Esophagus squamous epithelium (tissue), 5 donors: ENCODE measurements at regions of chr6 and their contacts with region 1.

Region 1: GRCh38 chr6:28775405-28776129 is 148.2 kb downstream of the TRIM27 start:
- DNase-seq: no peak
- H3K4me3 ChIP-seq: no peak overlapping the region
- H3K27ac ChIP-seq: no peak overlapping the region
- H3K4me1 ChIP-seq: no peaks in the 10 kb centered on the region
- H3K27me3 ChIP-seq: peaks cover 0 to 100% (median 58%) of the 10 kb centered on the region in 4 donors
- CTCF ChIP-seq: no peak
- POLR2A ChIP-seq: no peak

Region 2: DNA sequence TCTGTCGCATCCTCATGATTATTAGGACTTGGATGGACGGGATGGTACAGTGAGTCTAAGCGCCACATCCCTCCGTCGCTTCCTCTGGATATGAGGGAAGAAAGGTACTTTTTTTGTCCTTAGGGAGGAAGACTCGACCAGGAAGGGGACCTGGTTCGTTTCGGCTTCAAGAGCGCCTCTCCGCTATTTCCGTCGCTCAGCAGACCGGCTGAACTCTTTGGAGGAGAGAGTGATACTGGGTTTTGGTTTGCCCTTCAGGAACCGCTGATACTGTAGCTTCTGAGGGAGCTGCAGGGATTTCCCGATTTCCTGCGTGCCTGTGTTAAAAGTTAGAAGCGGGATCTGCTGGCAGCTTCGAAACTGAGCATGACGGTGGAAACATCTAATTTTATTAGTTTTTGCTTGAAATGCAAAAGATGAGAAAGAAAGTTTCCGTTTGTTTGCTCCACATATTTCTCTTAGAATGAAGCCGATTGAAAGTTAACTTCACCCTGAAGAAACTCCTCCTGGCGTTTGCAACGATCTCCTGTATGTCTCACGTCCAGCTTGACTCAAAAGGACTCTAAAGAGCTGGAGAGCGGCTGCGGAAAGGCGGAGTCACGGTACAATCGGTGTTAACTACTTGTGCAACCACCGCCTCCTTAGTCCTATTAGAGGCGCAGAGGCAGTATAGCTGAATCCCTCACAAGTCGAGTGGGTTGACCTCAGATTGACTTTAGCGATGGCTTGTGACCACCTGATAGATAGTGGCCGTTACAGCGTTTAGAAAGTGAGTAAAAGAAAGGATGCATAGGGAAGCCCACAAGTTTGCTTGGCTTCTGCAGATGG is 18.8 kb after region 1 on chr6:
- intact Hi-C with region 1: loop called (anchors 2 kb)
- DNase-seq: no peak
- H3K4me3 ChIP-seq: peak overlapping the region in 1 of 4 donors; percentile 20
- H3K27ac ChIP-seq: no peak overlapping the region
- H3K4me1 ChIP-seq: peaks cover 0 to 16% (median 0%) of the 10 kb centered on the region in 3 donors
- H3K27me3 ChIP-seq: peaks cover 0 to 95% (median 36%) of the 10 kb centered on the region in 4 donors
- CTCF ChIP-seq: no peak
- POLR2A ChIP-seq: no peak